T-cell (primary cell): ENCODE measurements at regions of chr14 and their contacts with region 1.

Region 1: DNA sequence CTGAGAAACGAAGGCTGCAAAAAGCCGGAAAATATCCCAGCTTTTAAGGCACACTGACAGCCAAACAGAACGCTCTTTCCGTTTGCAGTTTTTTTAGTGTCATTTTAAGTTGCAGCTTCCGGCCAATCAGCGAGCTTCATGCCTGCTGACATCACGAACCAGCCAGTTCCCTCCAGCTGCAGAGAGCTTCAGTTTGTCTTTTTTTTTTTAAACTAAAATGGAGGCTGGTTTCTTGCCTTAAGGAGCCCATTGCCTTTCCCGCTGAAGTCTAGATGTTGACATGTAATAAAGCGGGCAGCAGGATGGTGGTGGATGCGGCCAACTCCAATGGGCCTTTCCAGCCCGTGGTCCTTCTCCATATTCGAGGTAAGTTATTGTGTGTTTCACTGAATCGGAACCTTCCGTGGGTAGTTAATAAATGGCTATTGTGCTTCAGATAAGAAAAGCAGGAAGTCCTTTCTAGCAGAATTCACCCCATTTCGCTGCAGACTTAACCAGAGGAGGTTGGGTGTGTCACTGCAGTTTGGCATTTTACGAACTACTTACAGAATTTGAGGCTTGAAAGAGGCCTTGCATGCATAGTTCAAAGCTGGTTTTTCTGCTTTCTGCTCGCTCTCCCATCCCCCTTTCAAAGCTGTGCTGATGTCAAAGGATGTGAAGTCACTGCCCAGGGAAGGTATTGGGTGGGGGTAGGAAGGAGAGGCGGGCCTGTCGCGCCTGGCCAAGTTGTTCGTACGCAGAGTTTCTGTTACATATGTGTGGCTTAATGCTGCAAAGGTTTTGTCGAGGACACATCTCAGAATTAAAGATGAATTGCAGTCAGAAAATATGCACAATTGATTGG is 48.4 kb downstream of the PPP2R5C start:
- DNase-seq: peak; percentile 61 to 96 (median 90)
- ATAC-seq: peak; percentile 88 to 89 (median 88)
- H3K4me3 ChIP-seq: peak overlapping the region; percentile 69 to 74
- H3K4me3 Mint-ChIP-seq: peak overlapping the region; percentile 92 to 94 (median 94)
- H3K27ac ChIP-seq: peak overlapping the region; percentile 97
- H3K27ac Mint-ChIP-seq: peak overlapping the region; percentile 98 to 100
- H3K4me1 ChIP-seq: peaks cover 32 to 41% of the 10 kb centered on the region in 2 experiments
- H3K4me1 Mint-ChIP-seq: peaks cover 49 to 59% (median 52%) of the 10 kb centered on the region in 3 donors
- H3K27me3 ChIP-seq: no peaks in the 10 kb centered on the region
- H3K27me3 Mint-ChIP-seq: no peaks in the 10 kb centered on the region

Region 2: GRCh38 chr14:101707068-101707842 is 102.6 kb before region 1 on chr14:
- CTCF ChIA-PET with region 1: interaction called, 8 to 10 read pairs
- POLR2A ChIA-PET with region 1: interaction called, 7 to 9 read pairs
- DNase-seq: peak; percentile 43 to 94 (median 61)
- ATAC-seq: peak; percentile 50 to 69 (median 62)
- H3K4me3 ChIP-seq: peak overlapping the region in 1 of 2 donors; percentile 19
- H3K4me3 Mint-ChIP-seq: peak overlapping the region; percentile 37 to 68 (median 50)
- H3K27ac ChIP-seq: peak overlapping the region; percentile 85
- H3K27ac Mint-ChIP-seq: peak overlapping the region; percentile 89 to 92
- H3K4me1 ChIP-seq: peaks cover 16 to 59% of the 10 kb centered on the region in 2 experiments
- H3K4me1 Mint-ChIP-seq: peaks cover 41 to 56% (median 42%) of the 10 kb centered on the region in 3 donors
- H3K27me3 ChIP-seq: no peaks in the 10 kb centered on the region
- H3K27me3 Mint-ChIP-seq: no peaks in the 10 kb centered on the region

Region 3: DNA sequence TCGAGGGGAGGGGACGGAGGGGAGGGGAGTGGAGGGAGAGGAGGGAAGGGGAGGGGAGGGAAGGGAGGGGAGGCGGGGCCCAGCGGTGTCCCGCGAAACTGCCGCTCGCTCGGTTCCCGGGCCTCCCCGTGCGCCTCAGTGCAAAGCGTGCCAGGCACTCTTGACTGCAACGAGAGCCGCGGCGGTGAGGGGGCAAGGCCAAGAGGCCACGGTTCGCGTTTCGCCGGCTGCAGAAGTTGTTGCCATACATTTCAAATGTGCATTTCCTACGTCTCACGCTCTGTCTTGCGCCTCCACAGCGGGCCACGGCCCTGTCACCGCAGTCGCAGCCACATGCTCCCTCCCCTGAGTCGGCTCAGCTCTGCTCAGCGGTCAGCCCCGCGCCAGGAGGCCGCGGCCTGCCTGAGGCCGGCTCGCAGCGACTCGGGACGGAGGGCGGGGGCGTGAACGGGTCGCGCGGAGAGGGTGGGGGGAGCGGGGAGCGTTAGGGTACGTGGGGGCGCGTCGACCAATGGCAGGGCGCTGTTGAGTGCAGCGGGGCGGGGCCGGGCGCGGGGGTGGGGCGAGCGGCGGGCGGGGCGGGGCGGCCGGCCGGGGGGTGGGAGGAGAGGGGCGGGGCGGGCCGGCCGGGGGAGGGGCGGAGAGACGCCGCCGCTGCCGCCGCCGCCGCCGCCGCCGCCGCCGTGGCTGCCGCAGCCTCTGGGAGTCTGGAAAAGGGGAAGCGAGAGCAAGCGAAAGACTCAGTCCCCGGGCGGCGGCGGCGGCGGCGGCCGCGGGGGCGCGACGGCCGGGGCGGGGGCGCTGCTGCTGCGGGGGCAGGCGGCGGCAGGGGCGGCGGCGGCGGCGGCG is 48.6 kb before region 1 on chr14 and contains the start of gene PPP2R5C:
- CTCF ChIA-PET with region 1: interaction called in 1 of 2 experiments, 13 read pairs
- POLR2A ChIA-PET with region 1: interaction called, 4 to 24 read pairs
- DNase-seq: peak; percentile 77 to 92 (median 84)
- ATAC-seq: peak; percentile 71 to 75 (median 74)
- H3K4me3 ChIP-seq: peak within 1 kb of the TSS; percentile 78 to 96
- H3K4me3 Mint-ChIP-seq: peak within 1 kb of the TSS; percentile 88 to 91 (median 89)
- H3K27ac ChIP-seq: peak within 1 kb of the TSS; percentile 91
- H3K27ac Mint-ChIP-seq: peak within 1 kb of the TSS; percentile 80 to 83
- H3K4me1 ChIP-seq: peaks cover 2 to 26% of the 10 kb centered on the region in 2 experiments
- H3K4me1 Mint-ChIP-seq: peaks cover 32 to 47% (median 40%) of the 10 kb centered on the region in 3 donors
- H3K27me3 ChIP-seq: no peaks in the 10 kb centered on the region
- H3K27me3 Mint-ChIP-seq: no peaks in the 10 kb centered on the region
- total RNA-seq, gene PPP2R5C: 435 to 627 (median 489) TPM

Region 4: GRCh38 chr14:101774006-101774795 is 35.7 kb before region 1 on chr14:
- CTCF ChIA-PET with region 1: interaction called in 1 of 2 experiments, 21 read pairs
- POLR2A ChIA-PET with region 1: interaction called, 3 to 10 read pairs
- DNase-seq: peak in 1 of 35 experiments; percentile 20
- ATAC-seq: no peak
- H3K4me3 ChIP-seq: no peak overlapping the region
- H3K4me3 Mint-ChIP-seq: no peak overlapping the region
- H3K27ac ChIP-seq: no peak overlapping the region
- H3K27ac Mint-ChIP-seq: peak overlapping the region; percentile 34 to 59
- H3K4me1 ChIP-seq: peaks cover 0 to 25% of the 10 kb centered on the region in 2 experiments
- H3K4me1 Mint-ChIP-seq: peaks cover 48 to 59% (median 53%) of the 10 kb centered on the region in 3 donors
- H3K27me3 ChIP-seq: no peaks in the 10 kb centered on the region
- H3K27me3 Mint-ChIP-seq: peaks cover 0 to 2% of the 10 kb centered on the region in 2 donors

Region 5: DNA sequence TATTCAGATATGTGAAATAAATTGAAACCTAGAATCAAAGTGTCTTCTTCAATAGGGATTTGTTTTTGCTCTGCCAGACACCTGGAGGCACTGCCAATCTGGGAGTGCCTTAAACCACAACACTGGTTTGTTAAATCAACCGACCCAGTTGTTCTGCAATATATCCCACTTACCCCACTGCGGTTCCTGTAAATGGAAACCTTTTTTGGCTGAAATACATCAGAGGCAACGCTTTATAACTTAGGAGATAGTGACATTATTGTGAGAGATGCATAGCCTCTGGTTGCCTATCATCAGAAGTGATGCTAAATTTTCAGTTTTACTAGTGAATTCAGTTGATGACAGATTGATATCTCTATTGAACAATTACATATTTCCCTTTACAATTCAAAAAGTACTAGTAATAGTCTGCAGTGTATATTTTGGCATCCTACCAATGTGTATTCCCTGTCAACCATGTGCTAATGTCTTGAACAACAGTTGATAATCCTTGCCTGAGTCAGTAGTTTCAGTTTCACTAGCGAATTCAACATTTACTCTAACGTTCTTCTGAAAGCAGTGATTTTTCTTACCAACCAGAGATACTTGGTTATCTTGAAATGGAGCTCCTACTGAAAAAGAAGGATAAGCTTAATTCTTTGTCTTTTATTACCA is 17.8 kb before region 1 on chr14:
- CTCF ChIA-PET with region 1: interaction called in 1 of 2 experiments, 5 read pairs
- POLR2A ChIA-PET with region 1: interaction called, 6 to 29 read pairs
- DNase-seq: peak in 1 of 35 experiments; percentile 61
- ATAC-seq: peak; percentile 61 to 84 (median 73)
- H3K4me3 ChIP-seq: peak overlapping the region; percentile 5 to 41
- H3K4me3 Mint-ChIP-seq: peak overlapping the region; percentile 72 to 73 (median 72)
- H3K27ac ChIP-seq: peak overlapping the region; percentile 82
- H3K27ac Mint-ChIP-seq: peak overlapping the region; percentile 89 to 92
- H3K4me1 ChIP-seq: peaks cover 6 to 13% of the 10 kb centered on the region in 2 experiments
- H3K4me1 Mint-ChIP-seq: peaks cover 24 to 41% (median 25%) of the 10 kb centered on the region in 3 donors
- H3K27me3 ChIP-seq: no peaks in the 10 kb centered on the region
- H3K27me3 Mint-ChIP-seq: no peaks in the 10 kb centered on the region

Region 6: GRCh38 chr14:101830271-101830670 is 20.4 kb after region 1 on chr14:
- CTCF ChIA-PET with region 1: interaction called in 1 of 2 experiments, 8 read pairs
- POLR2A ChIA-PET with region 1: interaction called, 41 to 277 read pairs
- DNase-seq: no peak
- ATAC-seq: no peak
- H3K4me3 ChIP-seq: no peak overlapping the region
- H3K4me3 Mint-ChIP-seq: peak overlapping the region in 2 of 3 donors; percentile 59 to 81
- H3K27ac ChIP-seq: peak overlapping the region; percentile 99
- H3K27ac Mint-ChIP-seq: peak overlapping the region; percentile 94 to 97
- H3K4me1 ChIP-seq: peaks cover 43 to 80% of the 10 kb centered on the region in 2 experiments
- H3K4me1 Mint-ChIP-seq: peaks cover 94 to 97% (median 96%) of the 10 kb centered on the region in 3 donors
- H3K27me3 ChIP-seq: no peaks in the 10 kb centered on the region
- H3K27me3 Mint-ChIP-seq: no peaks in the 10 kb centered on the region

Region 7: GRCh38 chr14:101859958-101860357 is 50.1 kb after region 1 on chr14:
- CTCF ChIA-PET with region 1: no interaction called
- POLR2A ChIA-PET with region 1: no interaction called
- DNase-seq: no peak
- ATAC-seq: no peak
- H3K4me3 ChIP-seq: no peak overlapping the region
- H3K4me3 Mint-ChIP-seq: no peak overlapping the region
- H3K27ac ChIP-seq: peak overlapping the region; percentile 54
- H3K27ac Mint-ChIP-seq: peak overlapping the region; percentile 84 to 91
- H3K4me1 ChIP-seq: peaks cover 5 to 23% of the 10 kb centered on the region in 2 experiments
- H3K4me1 Mint-ChIP-seq: peaks cover 57 to 84% (median 77%) of the 10 kb centered on the region in 3 donors
- H3K27me3 ChIP-seq: no peaks in the 10 kb centered on the region
- H3K27me3 Mint-ChIP-seq: no peaks in the 10 kb centered on the region

Region 8: DNA sequence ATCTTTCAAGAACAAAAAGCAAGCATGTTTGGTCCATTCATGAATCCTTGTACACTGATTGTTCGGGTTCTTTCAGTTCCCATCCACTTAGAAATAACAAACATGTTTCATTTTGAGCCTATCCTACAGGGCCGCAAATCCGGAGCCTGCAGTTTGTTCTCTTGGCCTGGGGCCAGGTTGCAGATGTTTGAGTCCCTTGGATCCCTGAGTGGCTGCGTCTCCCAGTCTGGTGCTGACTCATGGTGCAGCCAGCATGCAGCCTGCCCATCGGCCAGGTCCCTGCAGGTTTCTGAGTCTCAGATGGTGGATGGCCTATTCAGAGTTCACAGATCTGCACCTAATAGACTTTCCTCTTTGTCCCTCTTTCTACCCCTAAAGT is 152.6 kb after region 1 on chr14:
- CTCF ChIA-PET with region 1: interaction called in 1 of 2 experiments, 4 read pairs
- POLR2A ChIA-PET with region 1: interaction called in 1 of 2 experiments, 10 read pairs
- DNase-seq: no peak
- ATAC-seq: no peak
- H3K4me3 ChIP-seq: no peak overlapping the region
- H3K4me3 Mint-ChIP-seq: no peak overlapping the region
- H3K27ac ChIP-seq: no peak overlapping the region
- H3K27ac Mint-ChIP-seq: no peak overlapping the region
- H3K4me1 ChIP-seq: peaks cover 6 to 24% of the 10 kb centered on the region in 2 experiments
- H3K4me1 Mint-ChIP-seq: peaks cover 36 to 38% (median 36%) of the 10 kb centered on the region in 3 donors
- H3K27me3 ChIP-seq: peaks cover 0 to 9% of the 10 kb centered on the region in 2 experiments
- H3K27me3 Mint-ChIP-seq: no peaks in the 10 kb centered on the region

Region 9: GRCh38 chr14:102116361-102117070 is 306.6 kb after region 1 on chr14:
- CTCF ChIA-PET with region 1: no interaction called
- POLR2A ChIA-PET with region 1: no interaction called
- DNase-seq: no peak
- ATAC-seq: no peak
- H3K4me3 ChIP-seq: no peak overlapping the region
- H3K4me3 Mint-ChIP-seq: no peak overlapping the region
- H3K27ac ChIP-seq: no peak overlapping the region
- H3K27ac Mint-ChIP-seq: no peak overlapping the region
- H3K4me1 ChIP-seq: no peaks in the 10 kb centered on the region
- H3K4me1 Mint-ChIP-seq: no peaks in the 10 kb centered on the region
- H3K27me3 ChIP-seq: peaks cover 0 to 4% of the 10 kb centered on the region in 2 experiments
- H3K27me3 Mint-ChIP-seq: no peaks in the 10 kb centered on the region